Posterior cingulate gyrus (tissue), 11 donors: ENCODE measurements at regions of chr5 and their contacts with region 1.

Region 1: DNA sequence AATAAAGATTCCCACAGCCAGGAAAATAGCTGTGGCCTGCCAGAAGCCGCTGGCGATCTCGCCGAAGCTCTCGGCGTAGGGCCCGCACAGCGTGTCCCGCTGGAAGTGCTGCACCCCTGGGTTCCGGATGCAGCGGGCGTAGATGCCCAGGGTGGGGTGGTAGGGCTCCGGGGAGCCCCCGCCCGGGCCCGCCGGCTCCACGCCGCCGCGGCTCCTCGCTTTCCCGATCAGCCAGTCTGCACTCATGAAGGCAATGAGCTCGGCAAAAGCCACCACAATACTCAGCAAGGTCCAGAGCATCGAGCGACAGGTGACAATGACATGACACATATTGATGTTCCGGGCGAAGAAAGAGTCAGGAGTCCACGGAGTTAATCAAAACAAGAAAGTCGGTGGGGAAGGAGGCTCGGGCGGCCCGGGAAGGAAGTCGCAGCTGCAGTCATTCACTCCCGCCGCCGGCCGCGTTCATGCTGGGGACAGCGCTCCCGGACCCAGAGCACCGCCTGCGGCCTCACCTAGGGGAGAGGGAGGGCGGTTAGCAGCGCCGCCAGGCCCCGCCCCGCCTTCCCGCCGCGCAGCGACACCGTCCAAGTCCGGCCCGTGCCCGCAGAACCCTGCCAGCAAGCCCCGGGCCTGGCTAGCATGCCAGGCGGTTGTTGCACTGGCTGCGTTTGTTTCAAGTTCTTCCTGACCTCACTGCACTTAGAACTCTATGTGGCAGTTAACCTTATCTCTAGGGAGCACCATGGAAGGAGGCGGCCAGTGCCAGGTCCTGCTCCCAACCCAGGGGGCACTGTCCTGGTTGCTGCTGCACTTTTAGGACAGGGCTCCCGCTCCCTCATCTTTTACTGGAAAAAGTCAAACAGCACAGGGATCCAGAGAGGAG is 138.4 kb downstream of the LHFPL2 start:
- DNase-seq: peak; percentile 35 to 93 (median 58)

Region 2: DNA sequence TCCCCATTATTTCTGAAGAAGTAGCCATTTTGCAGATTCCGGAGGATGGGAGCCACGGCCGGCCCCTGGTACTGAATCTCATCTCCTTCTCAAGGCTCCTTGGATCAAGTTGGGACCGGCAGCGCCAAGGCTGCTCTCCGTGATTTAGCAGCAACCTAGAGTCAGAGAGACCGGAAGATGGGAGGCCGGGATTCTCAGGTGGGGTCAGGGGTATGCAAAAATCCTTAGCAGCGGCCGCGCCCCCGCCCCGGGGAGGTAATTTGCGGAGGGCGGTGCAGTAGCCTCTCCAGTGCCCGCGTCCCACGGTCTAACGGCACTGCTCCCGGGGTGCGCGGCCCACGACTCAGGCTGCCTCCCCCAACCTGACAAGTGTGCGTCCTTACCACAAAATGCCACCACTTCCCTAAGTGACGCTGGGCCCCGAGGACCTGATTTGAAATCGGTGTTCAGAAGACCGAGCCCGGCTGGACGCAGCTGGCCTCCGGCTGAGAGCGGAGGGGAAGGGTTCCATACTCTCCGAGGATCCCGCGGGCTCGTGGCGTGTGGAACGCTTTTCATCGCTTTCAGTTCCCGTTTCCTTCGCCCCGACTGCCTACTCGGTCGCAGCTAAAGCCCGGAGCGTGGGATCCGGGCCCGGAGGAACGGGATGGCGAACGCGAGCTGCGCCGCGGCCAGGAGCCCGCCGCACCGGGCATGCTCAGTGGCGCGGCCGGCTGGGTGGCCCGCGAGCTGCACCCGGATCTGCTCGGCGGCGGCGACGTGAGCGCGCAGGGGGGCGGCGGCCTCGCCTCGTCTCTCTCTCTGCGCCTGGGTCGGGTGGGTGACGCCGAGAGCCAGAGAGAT is 150.1 kb before region 1 on chr5 and contains the start of gene SCAMP1:
- intact Hi-C with region 1: loop called (anchors 10 kb)
- DNase-seq: peak; percentile 82 to 98 (median 90)